IMR-90 (cell line): ENCODE measurements at regions of chr11 and their contacts with region 1.

Region 1: GRCh38 chr11:117426269-117426685 is 98.6 kb downstream of the CEP164 start:
- DNase-seq: peak; percentile 30
- ATAC-seq: peak; percentile 96
- H3K4me3 ChIP-seq: no peak overlapping the region
- H3K27ac ChIP-seq: no peak overlapping the region
- H3K4me1 ChIP-seq: no peaks in the 10 kb centered on the region
- H3K27me3 ChIP-seq: peaks cover 33% of the 10 kb centered on the region
- CTCF ChIP-seq: peak; percentile 82
- POLR2A ChIP-seq: no peak
- RAD21 ChIP-seq: peak; percentile 81

Region 2: DNA sequence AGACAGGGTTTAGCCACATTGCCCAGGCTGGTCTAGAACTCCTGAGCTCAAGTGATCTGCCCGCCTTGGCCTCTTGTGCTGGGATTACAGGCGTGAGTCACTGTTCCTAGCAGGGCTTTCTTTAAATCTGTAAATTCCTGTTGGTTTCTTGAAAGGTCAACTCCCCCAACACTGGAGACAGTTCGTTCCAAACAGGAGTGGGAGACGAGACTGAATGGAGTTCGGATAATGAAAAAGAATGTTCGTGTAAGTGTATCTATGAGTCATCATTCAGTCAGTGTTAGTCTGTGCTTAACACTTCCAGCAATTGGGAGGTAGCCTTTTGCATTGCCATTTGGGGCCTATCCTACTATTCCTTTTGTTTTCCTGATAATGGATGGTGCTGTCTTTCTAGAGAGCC is 145.1 kb before region 1 on chr11:
- CTCF ChIA-PET with region 1: no interaction called
- POLR2A ChIA-PET with region 1: no interaction called
- dilution Hi-C with region 1: no loop called
- in situ Hi-C with region 1: no loop called
- intact Hi-C with region 1: no loop called
- DNase-seq: peak; percentile 99
- ATAC-seq: peak; percentile 89
- H3K4me3 ChIP-seq: no peak overlapping the region
- H3K27ac ChIP-seq: peak overlapping the region; percentile 86
- H3K4me1 ChIP-seq: peaks cover 13% of the 10 kb centered on the region
- H3K27me3 ChIP-seq: no peaks in the 10 kb centered on the region
- CTCF ChIP-seq: no peak
- POLR2A ChIP-seq: no peak
- RAD21 ChIP-seq: no peak

Region 3: GRCh38 chr11:117410861-117411710 is 15.2 kb before region 1 on chr11:
- CTCF ChIA-PET with region 1: interaction called, 17 read pairs
- POLR2A ChIA-PET with region 1: no interaction called
- dilution Hi-C with region 1: no loop called
- in situ Hi-C with region 1: no loop called
- intact Hi-C with region 1: no loop called
- DNase-seq: no peak
- ATAC-seq: no peak
- H3K4me3 ChIP-seq: no peak overlapping the region
- H3K27ac ChIP-seq: no peak overlapping the region
- H3K4me1 ChIP-seq: no peaks in the 10 kb centered on the region
- H3K27me3 ChIP-seq: no peaks in the 10 kb centered on the region
- CTCF ChIP-seq: no peak
- POLR2A ChIP-seq: no peak
- RAD21 ChIP-seq: no peak

Region 4: DNA sequence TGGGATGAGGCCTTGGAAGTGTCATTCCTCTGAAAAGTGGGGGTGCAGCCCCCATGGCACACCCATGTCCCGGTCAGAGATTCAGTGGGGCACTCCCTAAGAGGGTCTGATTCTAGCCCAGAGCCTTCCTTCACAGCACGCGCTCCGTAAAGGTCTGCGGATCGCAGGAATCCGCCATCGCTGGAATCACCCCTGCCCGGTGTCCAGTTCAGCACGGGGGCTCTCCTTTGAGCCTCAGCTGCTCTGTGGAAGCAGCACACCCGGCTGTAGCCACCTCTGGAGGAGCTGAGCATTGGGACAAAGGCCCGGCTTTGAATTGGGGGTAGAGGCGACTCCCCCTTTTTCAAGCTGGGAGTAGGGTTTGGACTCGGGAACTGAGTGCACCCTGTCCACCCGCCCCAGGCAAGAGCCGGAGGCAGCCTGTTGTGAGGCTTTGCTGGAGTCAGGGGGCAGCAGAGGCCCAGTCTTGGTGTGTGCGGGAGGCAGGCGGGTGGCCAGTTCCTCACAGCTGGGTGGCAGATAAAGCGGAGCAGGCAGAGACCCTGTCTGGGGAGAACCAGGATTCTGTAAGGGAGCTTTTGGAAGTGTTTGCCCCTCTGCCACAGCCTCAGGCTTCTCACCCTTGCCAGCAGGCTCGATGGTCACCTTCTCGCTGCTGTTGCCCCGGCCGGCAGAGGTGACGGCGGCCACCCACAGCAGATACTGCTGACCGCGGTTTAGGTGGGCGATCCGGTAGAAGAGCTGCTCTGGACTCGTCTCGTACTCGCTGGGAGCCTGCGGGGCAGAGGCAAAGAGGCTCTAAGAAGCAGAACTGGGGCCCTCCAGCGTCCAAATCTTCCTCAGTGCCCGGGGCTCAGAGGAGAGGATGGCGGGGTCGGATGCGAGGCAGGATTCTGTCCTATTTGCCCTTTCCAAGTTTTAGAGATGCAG is 17.3 kb after region 1 on chr11:
- CTCF ChIA-PET with region 1: interaction called, 16 read pairs
- POLR2A ChIA-PET with region 1: no interaction called
- dilution Hi-C with region 1: no loop called
- in situ Hi-C with region 1: no loop called
- intact Hi-C with region 1: no loop called
- DNase-seq: peak; percentile 30
- ATAC-seq: peak; percentile 86
- H3K4me3 ChIP-seq: no peak overlapping the region
- H3K27ac ChIP-seq: no peak overlapping the region
- H3K4me1 ChIP-seq: no peaks in the 10 kb centered on the region
- H3K27me3 ChIP-seq: peaks cover 48% of the 10 kb centered on the region
- CTCF ChIP-seq: peak; percentile 60
- POLR2A ChIP-seq: no peak
- RAD21 ChIP-seq: peak; percentile 64

Region 5: DNA sequence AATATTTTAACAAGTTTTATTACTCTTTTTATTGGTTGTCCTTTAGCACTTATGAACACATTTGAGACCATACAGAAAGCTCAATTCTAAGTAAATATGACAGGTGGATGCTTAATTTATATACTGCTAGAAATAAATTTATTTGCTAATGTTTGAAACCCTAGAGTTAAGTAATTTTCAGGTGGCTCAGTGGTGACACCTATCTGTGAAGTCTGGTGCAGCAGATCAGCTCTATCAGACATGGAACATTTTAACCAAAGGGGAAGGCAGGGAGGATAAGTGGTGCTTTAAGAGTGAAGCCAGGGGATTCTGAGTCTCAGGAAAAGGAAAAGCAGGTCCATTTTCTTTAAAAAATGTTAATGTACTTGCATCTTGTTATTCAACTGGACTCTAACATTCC is 194.9 kb after region 1 on chr11:
- CTCF ChIA-PET with region 1: interaction called, 8 read pairs
- POLR2A ChIA-PET with region 1: no interaction called
- dilution Hi-C with region 1: no loop called
- in situ Hi-C with region 1: no loop called
- intact Hi-C with region 1: loop called (anchors 1 kb)
- DNase-seq: peak; percentile 18
- ATAC-seq: peak; percentile 48; the same call in 1 of the 2 replicates
- H3K4me3 ChIP-seq: no peak overlapping the region
- H3K27ac ChIP-seq: no peak overlapping the region
- H3K4me1 ChIP-seq: no peaks in the 10 kb centered on the region
- H3K27me3 ChIP-seq: peaks cover 3% of the 10 kb centered on the region
- CTCF ChIP-seq: peak; percentile 61
- POLR2A ChIP-seq: no peak
- RAD21 ChIP-seq: peak; percentile 49

Region 6: DNA sequence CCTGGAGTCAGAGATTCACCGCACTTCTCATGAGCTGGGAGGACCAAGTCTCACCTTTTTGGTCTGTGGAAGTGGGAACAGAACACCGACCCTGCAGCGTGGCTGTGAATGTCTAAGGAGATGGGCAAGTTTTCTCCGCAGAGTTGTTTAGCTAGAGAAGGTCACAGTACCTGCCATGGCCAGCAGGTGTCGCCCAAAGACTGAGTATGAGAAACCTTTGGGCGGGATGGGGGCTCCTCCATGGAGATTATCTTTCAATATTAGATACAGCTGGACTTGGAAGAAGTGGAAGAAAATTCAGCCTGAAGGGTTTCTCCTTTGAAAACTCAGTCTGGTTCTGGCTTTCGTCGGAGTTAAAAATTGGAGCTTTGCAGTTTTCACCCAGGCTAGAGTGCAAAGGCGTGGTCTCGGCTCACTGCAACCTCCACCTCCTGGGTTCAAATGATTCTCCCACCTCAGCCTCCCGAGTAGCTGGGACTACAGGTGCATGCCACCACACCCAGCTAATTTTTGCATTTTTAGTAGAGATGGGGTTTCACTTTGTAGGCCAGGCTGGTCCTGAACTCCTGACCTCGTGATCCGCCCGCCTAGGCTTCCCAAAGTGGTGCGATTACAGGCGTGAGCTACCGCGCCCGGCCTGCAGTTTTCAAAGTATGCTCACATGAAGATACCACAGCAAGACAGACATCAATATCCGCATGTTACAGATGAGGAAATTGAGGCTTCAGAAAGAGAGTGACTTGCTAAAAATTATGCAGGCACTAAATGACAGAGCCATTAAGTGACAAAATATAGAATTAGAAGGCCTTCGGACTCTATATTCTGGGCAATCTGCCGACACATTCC is 381.4 kb after region 1 on chr11:
- CTCF ChIA-PET with region 1: interaction called, 10 read pairs
- POLR2A ChIA-PET with region 1: no interaction called
- dilution Hi-C with region 1: no loop called
- in situ Hi-C with region 1: no loop called
- intact Hi-C with region 1: no loop called
- DNase-seq: peak; percentile 51
- ATAC-seq: peak; percentile 91
- H3K4me3 ChIP-seq: no peak overlapping the region
- H3K27ac ChIP-seq: no peak overlapping the region
- H3K4me1 ChIP-seq: no peaks in the 10 kb centered on the region
- H3K27me3 ChIP-seq: peaks cover 26% of the 10 kb centered on the region
- CTCF ChIP-seq: peak; percentile 87
- POLR2A ChIP-seq: no peak
- RAD21 ChIP-seq: peak; percentile 86

Region 7: GRCh38 chr11:117817368-117818040 is 391.2 kb after region 1 on chr11:
- CTCF ChIA-PET with region 1: interaction called, 12 read pairs
- POLR2A ChIA-PET with region 1: no interaction called
- dilution Hi-C with region 1: no loop called
- in situ Hi-C with region 1: no loop called
- intact Hi-C with region 1: loop called (anchors 1 kb)
- DNase-seq: peak; percentile 65
- ATAC-seq: peak; percentile 81
- H3K4me3 ChIP-seq: no peak overlapping the region
- H3K27ac ChIP-seq: no peak overlapping the region
- H3K4me1 ChIP-seq: peaks cover 2% of the 10 kb centered on the region; the same call in 1 of the 2 replicates
- H3K27me3 ChIP-seq: no peaks in the 10 kb centered on the region; the same call in 1 of the 2 replicates
- CTCF ChIP-seq: peak; percentile 95
- POLR2A ChIP-seq: no peak
- RAD21 ChIP-seq: peak; percentile 73

Region 8: GRCh38 chr11:117946842-117947526 is 520.7 kb after region 1 on chr11:
- CTCF ChIA-PET with region 1: interaction called, 3 read pairs
- POLR2A ChIA-PET with region 1: no interaction called
- dilution Hi-C with region 1: no loop called
- in situ Hi-C with region 1: no loop called
- intact Hi-C with region 1: loop called (anchors 2 kb)
- DNase-seq: peak; percentile 91
- ATAC-seq: peak; percentile 97
- H3K4me3 ChIP-seq: no peak overlapping the region
- H3K27ac ChIP-seq: no peak overlapping the region
- H3K4me1 ChIP-seq: no peaks in the 10 kb centered on the region
- H3K27me3 ChIP-seq: peaks cover 7% of the 10 kb centered on the region; the same call in 1 of the 2 replicates
- CTCF ChIP-seq: peak; percentile 98
- POLR2A ChIP-seq: peak; percentile 54; the same call in 1 of the 2 replicates
- RAD21 ChIP-seq: peak; percentile 99